Activated T-helper 1 cell treated with anti-CD3 and anti-CD28 coated beads, Interleukin-12 subunit alpha, Interleukin-12 subunit beta, Interleukin-2, Interleukin-4 antibody, amounts not matched to agents 30 ng/mL and 10 ng/mL and 1 ng/mL, durations not matched to agents 14 hours and 24 hours and 36 hours (primary cell): ENCODE measurements at regions of chr2 and their contacts with region 1.

Region 1: GRCh38 chr2:127526149-127527000 is at the start of gene IWS1:
- DNase-seq: peak; percentile 92
- H3K4me3 Mint-ChIP-seq: peak within 1 kb of the TSS; percentile 92
- H3K27ac Mint-ChIP-seq: peak within 1 kb of the TSS; percentile 94
- H3K4me1 Mint-ChIP-seq: peaks cover 29% of the 10 kb centered on the region
- H3K27me3 Mint-ChIP-seq: peaks cover 10% of the 10 kb centered on the region
- total RNA-seq, gene IWS1: 52.3 and 57.6 TPM in 2 replicates

Region 2: GRCh38 chr2:127081826-127082633 is 444.3 kb before region 1 on chr2:
- intact Hi-C with region 1: loop called (anchors 2 kb)
- DNase-seq: peak; percentile 72
- H3K4me3 Mint-ChIP-seq: peak overlapping the region; percentile 86
- H3K27ac Mint-ChIP-seq: peak overlapping the region; percentile 89
- H3K4me1 Mint-ChIP-seq: peaks cover 84% of the 10 kb centered on the region
- H3K27me3 Mint-ChIP-seq: peaks cover 2% of the 10 kb centered on the region

Region 3: GRCh38 chr2:127408004-127408806 is 118.2 kb before region 1 on chr2:
- intact Hi-C with region 1: loop called (anchors 1 kb)
- DNase-seq: peak; percentile 80
- H3K4me3 Mint-ChIP-seq: peak overlapping the region; percentile 53
- H3K27ac Mint-ChIP-seq: peak overlapping the region; percentile 71
- H3K4me1 Mint-ChIP-seq: peaks cover 28% of the 10 kb centered on the region
- H3K27me3 Mint-ChIP-seq: peaks cover 15% of the 10 kb centered on the region

Region 4: DNA sequence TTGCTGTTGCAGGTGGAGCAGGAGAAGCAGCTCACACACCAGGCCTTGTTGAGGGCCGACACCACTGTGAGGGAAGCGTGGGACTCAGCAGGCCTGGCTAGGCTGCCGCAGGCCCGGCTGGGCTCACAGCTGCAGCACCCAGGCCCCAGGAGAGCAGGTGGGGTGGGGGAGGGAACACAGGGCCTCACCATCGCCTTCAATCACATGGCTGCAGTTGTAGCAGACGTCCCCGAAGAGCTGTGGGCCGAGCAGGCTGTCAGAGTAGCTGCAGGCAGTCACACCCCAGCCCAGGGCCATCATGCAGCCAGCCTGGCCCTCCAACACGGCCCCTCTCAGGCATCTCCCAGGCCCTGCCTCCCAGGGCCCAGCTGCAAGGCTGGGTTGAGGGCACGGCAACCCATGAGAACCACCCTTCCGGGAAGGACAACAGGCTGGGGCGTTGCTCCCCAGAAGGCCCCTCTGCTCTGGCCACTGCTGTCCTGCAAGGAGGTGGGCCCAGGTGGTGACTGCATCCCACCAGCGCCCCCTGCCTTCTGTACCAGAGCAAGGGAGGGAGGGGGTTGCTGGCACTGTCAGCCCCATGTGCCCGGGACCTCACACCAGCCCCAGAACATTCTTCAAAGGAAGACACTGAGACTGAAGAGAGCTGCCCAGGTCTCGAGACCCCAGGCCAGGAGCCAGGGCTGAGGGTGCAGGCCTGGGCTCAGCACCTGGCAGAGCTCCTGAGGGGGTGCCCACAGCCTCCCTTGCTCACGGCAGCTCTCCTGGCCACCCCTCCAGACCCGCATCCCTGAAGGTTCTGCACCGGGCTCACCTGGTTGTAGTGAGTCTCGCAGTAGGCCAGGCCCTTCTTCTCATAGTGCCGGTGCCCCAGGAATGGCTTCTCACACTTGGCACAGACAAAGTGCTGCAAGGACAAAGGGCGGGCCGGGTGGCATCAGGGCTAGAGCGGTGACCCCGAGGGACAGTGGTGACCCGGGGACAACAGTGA is 114.0 kb after region 1 on chr2:
- intact Hi-C with region 1: loop called (anchors 2 kb)
- DNase-seq: no peak
- H3K4me3 Mint-ChIP-seq: peak overlapping the region; percentile 49
- H3K27ac Mint-ChIP-seq: peak overlapping the region; percentile 70
- H3K4me1 Mint-ChIP-seq: peaks cover 7% of the 10 kb centered on the region
- H3K27me3 Mint-ChIP-seq: no peaks in the 10 kb centered on the region

Region 5: DNA sequence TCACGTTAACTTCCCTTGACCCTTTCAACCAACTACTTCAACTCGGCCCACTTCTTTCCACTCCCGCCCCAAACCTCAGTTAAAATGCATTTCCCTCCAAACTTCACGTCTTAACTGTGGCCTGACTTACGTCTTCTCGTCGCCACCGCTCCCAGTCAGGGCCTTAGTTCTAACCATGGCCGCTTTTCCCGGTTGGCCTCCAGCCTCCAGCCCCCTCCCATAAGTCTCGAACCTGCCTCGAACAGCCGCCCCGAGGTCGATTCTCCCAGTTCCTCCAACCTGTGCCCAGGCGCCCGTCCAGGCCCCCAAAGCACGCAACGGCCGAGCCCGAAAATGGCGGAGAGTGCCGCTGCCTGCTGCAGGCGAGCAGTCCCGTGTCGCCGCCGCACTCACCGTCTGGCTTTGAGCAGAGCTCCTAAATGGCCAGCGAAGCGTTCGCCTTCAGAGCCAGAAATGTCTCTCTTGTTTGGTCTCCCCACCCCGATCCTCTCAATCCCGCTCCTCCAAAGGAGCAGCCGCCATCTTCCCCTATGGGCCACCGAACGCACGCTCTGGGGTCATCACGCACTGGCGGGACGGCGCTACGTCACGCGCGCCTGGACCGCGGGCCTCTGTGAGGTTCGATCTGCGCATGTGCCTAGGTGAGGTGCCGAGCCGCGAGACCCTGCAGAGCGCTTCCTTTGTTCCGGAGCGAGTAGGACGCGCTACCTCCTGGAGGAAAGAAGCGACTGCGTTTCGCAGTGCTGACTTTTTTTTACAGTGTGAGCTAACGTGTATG is 284.4 kb after region 1 on chr2 and contains the start of gene WDR33:
- intact Hi-C with region 1: loop called (anchors 2 kb)
- DNase-seq: peak; percentile 94
- H3K4me3 Mint-ChIP-seq: peak within 1 kb of the TSS; percentile 95
- H3K27ac Mint-ChIP-seq: peak within 1 kb of the TSS; percentile 94
- H3K4me1 Mint-ChIP-seq: peaks cover 42% of the 10 kb centered on the region
- H3K27me3 Mint-ChIP-seq: peaks cover 6% of the 10 kb centered on the region
- total RNA-seq, gene WDR33: 81.0 and 82.4 TPM in 2 replicates

Region 6: DNA sequence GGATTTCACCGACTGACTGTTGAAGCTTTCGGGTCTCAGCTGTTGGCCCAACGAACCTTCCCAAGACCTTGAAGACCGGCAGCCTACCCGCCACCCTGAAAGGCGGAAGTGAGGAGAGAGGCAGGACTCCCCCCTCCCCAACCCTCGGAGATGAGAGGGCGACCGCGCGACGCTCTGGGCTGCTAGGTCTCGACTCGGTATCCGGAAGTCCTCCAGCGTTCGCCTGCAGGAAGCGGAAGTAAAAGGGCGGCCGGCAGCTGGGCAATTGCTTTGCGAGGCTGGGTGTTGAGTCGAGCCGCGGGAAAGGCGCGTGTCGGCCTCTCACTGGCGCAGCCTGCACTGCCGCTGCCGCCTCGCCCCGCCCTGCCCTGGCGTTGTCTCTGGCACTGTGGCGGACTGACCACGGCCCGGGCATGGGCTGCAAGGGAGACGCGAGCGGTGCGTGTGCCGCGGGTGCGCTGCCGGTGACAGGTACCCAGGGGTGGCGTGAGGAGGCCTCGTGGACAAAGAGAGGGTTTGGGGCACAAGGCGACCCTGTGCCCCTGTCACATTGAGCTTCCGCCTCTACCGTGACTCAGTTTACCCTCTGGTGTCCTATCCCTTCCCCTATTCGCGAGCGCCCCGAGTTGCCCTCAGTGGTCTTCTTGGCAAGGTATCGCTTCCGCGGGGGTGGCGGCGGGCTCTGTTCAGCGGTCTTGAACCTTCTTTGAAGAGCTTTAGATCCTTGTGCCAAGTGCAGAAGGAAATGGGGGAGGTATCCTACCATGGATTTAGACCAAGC is 564.8 kb after region 1 on chr2 and contains the start of gene UGGT1:
- intact Hi-C with region 1: loop called (anchors 1 kb)
- DNase-seq: peak; percentile 93
- H3K4me3 Mint-ChIP-seq: peak within 1 kb of the TSS; percentile 87
- H3K27ac Mint-ChIP-seq: peak within 1 kb of the TSS; percentile 85
- H3K4me1 Mint-ChIP-seq: peaks cover 38% of the 10 kb centered on the region
- H3K27me3 Mint-ChIP-seq: peaks cover 7% of the 10 kb centered on the region
- total RNA-seq, gene UGGT1: 65.2 and 70.7 TPM in 2 replicates